GM10248 (cell line): ENCODE measurements at regions of chr19 and their contacts with region 1.

Region 1: DNA sequence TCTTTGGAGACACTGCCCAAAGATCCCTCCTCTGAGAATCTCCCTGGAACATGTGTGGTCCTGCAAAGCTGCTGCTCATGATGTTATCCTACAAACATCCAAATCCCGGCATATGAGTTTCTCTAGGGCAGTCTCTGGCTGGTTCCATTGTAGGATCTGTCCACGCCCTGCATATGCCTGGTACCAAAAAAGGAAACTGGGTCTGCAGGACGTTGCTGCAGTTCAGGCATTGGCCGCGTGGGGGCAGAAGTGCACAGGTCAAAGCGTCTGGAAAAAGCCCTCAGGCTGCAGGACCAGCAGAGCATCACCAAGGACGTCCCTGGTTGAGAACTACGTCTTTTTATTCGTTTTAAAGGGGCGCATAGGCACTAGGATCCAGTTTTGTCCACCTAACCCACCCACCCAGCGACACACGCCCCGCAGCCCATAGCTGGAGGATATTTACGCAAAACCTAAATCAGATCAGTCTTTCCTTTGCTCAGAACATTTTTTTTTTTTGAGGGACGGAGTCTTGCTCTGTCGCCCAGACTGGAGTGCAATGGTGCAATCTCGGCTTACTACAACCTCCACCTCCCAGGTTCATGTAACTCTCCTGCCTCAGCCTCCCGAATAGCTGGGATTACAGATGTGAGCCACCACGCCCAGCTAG is 12.9 kb upstream of the ZNF564 start:
- DNase-seq: peak; percentile 92
- CTCF ChIP-seq: peak; percentile 97

Region 2: GRCh38 chr19:12623361-12624022 is 59.4 kb after region 1 on chr19:
- CTCF ChIA-PET with region 1: no interaction called
- POLR2A ChIA-PET with region 1: no interaction called
- DNase-seq: no peak
- CTCF ChIP-seq: no peak

Region 3: DNA sequence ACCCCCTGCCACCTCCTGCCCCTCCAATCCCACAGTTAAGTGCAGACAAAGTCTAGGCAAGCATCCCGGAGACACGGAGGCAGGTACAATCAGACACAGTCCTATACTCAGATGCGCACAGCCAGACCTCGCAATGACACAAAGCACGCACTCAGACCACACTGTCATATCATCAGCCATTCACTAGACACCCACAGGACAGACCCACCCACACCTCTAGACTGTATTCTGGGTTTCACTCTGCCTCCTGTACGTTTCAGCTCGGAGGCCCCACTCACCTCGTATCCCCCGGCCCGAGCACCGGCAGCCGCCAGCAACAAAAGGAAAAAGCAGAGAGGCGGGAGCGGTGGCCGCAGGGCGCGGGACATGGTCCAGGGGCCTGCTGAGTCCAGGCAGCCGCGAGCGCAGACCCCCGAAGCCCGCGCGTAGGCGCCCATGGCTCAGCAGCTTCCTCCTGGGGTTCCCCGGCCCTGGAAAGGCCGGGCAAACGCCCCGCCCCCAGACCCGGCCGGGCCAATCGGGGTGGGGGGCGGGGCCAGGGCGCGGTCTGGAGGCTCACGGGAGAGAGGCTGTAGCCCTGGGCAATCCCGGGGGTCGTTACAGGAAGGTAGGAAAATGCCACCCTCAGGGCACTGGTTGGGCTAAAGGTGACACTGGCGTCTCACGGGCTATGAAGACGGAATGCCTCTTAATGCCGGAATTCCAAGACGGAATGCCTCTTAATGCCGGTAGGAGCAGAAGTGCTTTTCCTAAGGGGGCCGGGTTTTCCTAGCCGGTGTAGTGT is 102.3 kb after region 1 on chr19 and contains the starts of genes MAN2B1 and WDR83:
- CTCF ChIA-PET with region 1: interaction called, 93 read pairs
- POLR2A ChIA-PET with region 1: no interaction called
- DNase-seq: peak; percentile 94
- CTCF ChIP-seq: no peak